CD4-positive, alpha-beta memory T cell (primary cell): ENCODE measurements at regions of chr6 and their contacts with region 1.

Region 1: DNA sequence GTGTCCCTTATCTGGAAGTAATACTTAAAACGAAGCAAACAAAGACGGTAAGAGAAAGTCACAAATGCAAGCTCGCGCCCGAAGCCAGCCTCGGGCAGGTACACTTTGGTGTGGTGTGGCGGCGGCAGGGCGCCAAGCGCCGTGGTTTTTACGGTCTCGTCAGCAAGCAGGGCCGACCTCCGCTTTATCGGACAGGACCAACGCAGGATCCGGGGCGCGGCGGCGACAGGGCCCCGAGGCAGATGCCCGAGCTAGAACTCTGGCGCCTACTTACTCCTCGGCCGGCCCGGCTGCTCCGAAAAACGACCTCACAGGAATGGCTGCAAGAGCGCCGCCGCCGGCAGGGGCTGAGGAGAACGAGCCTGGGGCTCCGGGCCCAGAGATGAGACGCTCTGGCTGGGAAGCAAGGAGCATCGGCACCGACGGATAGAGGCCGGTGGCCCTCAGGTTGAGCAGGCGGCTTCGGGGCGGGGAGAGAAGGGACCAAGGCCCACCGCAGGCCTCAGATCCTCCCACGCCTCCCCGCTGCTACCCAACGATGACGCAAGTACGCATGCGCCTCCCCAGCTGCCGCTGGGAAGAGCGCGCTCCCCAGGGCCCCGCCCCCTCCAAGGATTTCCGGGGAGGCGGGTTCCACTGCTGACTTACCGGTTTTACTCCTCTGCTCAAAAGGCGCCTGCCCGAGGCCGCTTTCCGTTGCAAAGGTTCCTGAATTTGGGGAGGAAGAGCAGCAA is 60.6 kb downstream of the FAM217A start:
- DNase-seq: peak; percentile 94 to 96 (median 95)
- H3K4me3 ChIP-seq: peak overlapping the region; percentile 57 to 64
- H3K4me3 Mint-ChIP-seq: peak overlapping the region; percentile 89 to 99 (median 96)
- H3K27ac ChIP-seq: peak overlapping the region; percentile 91
- H3K27ac Mint-ChIP-seq: peak overlapping the region; percentile 90 to 98 (median 96)
- H3K4me1 ChIP-seq: peaks cover 71% of the 10 kb centered on the region
- H3K4me1 Mint-ChIP-seq: peaks cover 49 to 88% (median 66%) of the 10 kb centered on the region in 4 donors
- H3K27me3 ChIP-seq: no peaks in the 10 kb centered on the region
- H3K27me3 Mint-ChIP-seq: no peaks in the 10 kb centered on the region

Region 2: GRCh38 chr6:3118353-3119039 is 899.8 kb before region 1 on chr6 and contains the start of gene BPHL:
- CTCF ChIA-PET with region 1: no interaction called
- POLR2A ChIA-PET with region 1: interaction called, 3 read pairs
- intact Hi-C with region 1: loop called (anchors 2 kb)
- DNase-seq: peak; percentile 98 to 100 (median 99)
- H3K4me3 ChIP-seq: peak within 1 kb of the TSS; percentile 76 to 94
- H3K4me3 Mint-ChIP-seq: peak within 1 kb of the TSS; percentile 75 to 96 (median 91)
- H3K27ac ChIP-seq: peak within 1 kb of the TSS; percentile 87
- H3K27ac Mint-ChIP-seq: peak within 1 kb of the TSS; percentile 93 to 97 (median 96)
- H3K4me1 ChIP-seq: peaks cover 14% of the 10 kb centered on the region
- H3K4me1 Mint-ChIP-seq: peaks cover 7 to 20% (median 14%) of the 10 kb centered on the region in 4 donors
- H3K27me3 ChIP-seq: no peaks in the 10 kb centered on the region
- H3K27me3 Mint-ChIP-seq: no peaks in the 10 kb centered on the region
- total RNA-seq, gene BPHL: 11.9 to 13.7 TPM

Region 3: GRCh38 chr6:3456755-3457466 is 561.4 kb before region 1 on chr6 and contains the start of gene SLC22A23:
- CTCF ChIA-PET with region 1: interaction called, 3 read pairs
- POLR2A ChIA-PET with region 1: no interaction called
- intact Hi-C with region 1: loop called (anchors 5 kb)
- DNase-seq: peak; percentile 74 to 79 (median 76)
- H3K4me3 ChIP-seq: peak within 1 kb of the TSS; percentile 55 to 63
- H3K4me3 Mint-ChIP-seq: peak within 1 kb of the TSS; percentile 81 to 92 (median 88)
- H3K27ac ChIP-seq: peak within 1 kb of the TSS; percentile 37
- H3K27ac Mint-ChIP-seq: peak within 1 kb of the TSS; percentile 62 to 89 (median 80)
- H3K4me1 ChIP-seq: peaks cover 35% of the 10 kb centered on the region
- H3K4me1 Mint-ChIP-seq: peaks cover 6 to 14% (median 9%) of the 10 kb centered on the region in 4 donors
- H3K27me3 ChIP-seq: peaks cover 6% of the 10 kb centered on the region
- H3K27me3 Mint-ChIP-seq: peaks cover 3 to 9% of the 10 kb centered on the region in 2 donors
- total RNA-seq, gene SLC22A23: 7.9 to 12.5 TPM

Region 4: DNA sequence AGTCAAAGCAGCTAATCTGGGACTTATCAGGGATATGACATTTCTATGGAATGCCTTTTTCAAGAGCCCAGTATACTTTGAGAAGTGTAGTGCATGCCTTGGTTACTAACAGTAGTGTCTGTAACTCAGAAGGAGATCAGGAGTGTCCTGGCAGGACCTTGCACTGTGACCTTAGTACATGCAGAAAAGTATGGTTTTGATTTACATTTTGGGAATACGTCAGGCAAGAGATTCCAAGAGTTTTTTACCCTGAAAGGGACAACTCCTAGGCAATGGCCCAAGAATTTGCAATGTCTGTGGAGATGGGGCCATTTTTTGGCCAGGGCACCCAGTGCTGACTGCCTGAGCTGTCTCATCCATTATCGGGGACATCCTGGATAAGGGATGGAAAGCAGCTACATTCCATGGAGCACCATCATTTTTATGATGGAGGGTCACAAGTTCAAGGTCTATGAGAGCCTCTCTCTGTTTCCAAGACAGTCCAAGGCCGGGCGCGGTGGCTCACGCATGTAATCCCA is 89.0 kb before region 1 on chr6:
- CTCF ChIA-PET with region 1: interaction called, 11 read pairs
- POLR2A ChIA-PET with region 1: interaction called, 3 read pairs
- intact Hi-C with region 1: no loop called
- DNase-seq: no peak
- H3K4me3 ChIP-seq: no peak overlapping the region
- H3K4me3 Mint-ChIP-seq: no peak overlapping the region
- H3K27ac ChIP-seq: no peak overlapping the region
- H3K27ac Mint-ChIP-seq: no peak overlapping the region
- H3K4me1 ChIP-seq: no peaks in the 10 kb centered on the region
- H3K4me1 Mint-ChIP-seq: no peaks in the 10 kb centered on the region
- H3K27me3 ChIP-seq: no peaks in the 10 kb centered on the region
- H3K27me3 Mint-ChIP-seq: no peaks in the 10 kb centered on the region

Region 5: DNA sequence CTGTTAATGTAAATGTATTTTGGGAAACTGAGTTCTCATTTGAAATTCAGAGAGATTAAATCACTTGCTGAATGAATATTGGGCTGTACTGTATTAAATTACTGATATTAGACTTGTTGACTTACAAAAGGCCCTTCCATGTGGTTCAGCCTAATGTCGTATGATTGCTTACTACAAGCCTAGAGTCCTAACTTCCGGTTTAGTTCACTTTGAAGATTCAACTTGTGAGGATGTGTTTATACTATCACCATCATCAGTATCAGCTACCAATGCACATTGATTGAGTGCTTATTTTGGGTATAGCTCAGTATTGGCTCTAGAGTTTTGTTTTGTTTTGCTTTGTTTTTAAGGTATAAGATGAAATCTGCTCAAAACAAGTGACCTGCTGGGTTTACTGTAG is 12.3 kb after region 1 on chr6:
- CTCF ChIA-PET with region 1: interaction called, 16 read pairs
- POLR2A ChIA-PET with region 1: interaction called, 22 read pairs
- intact Hi-C with region 1: loop called (anchors 1 kb)
- DNase-seq: peak in 2 of 5 donors; percentile 32 to 38
- H3K4me3 ChIP-seq: no peak overlapping the region
- H3K4me3 Mint-ChIP-seq: peak overlapping the region in 5 of 8 donors; percentile 1 to 59 (median 3)
- H3K27ac ChIP-seq: peak overlapping the region; percentile 36
- H3K27ac Mint-ChIP-seq: peak overlapping the region in 6 of 7 donors; percentile 0 to 86 (median 55)
- H3K4me1 ChIP-seq: peaks cover 77% of the 10 kb centered on the region
- H3K4me1 Mint-ChIP-seq: peaks cover 55 to 84% (median 70%) of the 10 kb centered on the region in 4 donors
- H3K27me3 ChIP-seq: no peaks in the 10 kb centered on the region
- H3K27me3 Mint-ChIP-seq: no peaks in the 10 kb centered on the region

Region 6: DNA sequence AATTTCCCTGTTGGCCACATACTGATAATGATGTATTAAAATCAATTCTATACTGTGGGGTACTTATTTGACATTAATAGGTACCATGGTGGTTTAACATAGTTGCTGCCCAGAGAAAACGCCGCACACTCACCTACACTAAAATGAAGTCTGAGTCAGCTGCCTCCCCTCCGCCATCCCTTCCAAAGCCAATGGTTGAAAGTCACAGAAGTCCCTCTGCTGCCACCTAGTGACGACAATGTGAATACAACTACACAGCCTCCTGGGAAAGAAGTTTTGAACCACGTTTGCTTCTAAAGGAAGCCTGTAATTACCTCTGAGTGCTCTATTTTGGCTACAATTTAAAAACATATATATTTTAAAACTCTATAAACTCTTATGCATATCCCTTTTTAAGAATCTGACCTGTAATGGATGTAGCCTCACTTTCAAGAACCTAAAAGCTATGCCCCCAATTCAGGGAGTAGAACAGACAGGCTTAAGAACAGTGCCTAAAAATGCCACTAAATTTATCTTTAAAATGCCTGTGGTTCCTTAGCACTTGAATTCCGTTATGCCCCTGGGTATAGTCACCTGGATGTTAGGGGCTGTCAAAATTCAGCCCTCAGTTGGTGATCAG is 137.6 kb after region 1 on chr6:
- CTCF ChIA-PET with region 1: interaction called, 5 read pairs
- POLR2A ChIA-PET with region 1: interaction called, 3 read pairs
- intact Hi-C with region 1: loop called (anchors 1 kb)
- DNase-seq: peak; percentile 69 to 81 (median 73)
- H3K4me3 ChIP-seq: no peak overlapping the region
- H3K4me3 Mint-ChIP-seq: no peak overlapping the region
- H3K27ac ChIP-seq: no peak overlapping the region
- H3K27ac Mint-ChIP-seq: peak overlapping the region in 1 of 7 donors; percentile 25
- H3K4me1 ChIP-seq: no peaks in the 10 kb centered on the region
- H3K4me1 Mint-ChIP-seq: peaks cover 0 to 5% (median 2%) of the 10 kb centered on the region in 4 donors
- H3K27me3 ChIP-seq: no peaks in the 10 kb centered on the region
- H3K27me3 Mint-ChIP-seq: peaks cover 2 to 4% of the 10 kb centered on the region in 2 donors